ENCODE measurements at regions of chr19 and their contacts with region 1.

Region 1: DNA sequence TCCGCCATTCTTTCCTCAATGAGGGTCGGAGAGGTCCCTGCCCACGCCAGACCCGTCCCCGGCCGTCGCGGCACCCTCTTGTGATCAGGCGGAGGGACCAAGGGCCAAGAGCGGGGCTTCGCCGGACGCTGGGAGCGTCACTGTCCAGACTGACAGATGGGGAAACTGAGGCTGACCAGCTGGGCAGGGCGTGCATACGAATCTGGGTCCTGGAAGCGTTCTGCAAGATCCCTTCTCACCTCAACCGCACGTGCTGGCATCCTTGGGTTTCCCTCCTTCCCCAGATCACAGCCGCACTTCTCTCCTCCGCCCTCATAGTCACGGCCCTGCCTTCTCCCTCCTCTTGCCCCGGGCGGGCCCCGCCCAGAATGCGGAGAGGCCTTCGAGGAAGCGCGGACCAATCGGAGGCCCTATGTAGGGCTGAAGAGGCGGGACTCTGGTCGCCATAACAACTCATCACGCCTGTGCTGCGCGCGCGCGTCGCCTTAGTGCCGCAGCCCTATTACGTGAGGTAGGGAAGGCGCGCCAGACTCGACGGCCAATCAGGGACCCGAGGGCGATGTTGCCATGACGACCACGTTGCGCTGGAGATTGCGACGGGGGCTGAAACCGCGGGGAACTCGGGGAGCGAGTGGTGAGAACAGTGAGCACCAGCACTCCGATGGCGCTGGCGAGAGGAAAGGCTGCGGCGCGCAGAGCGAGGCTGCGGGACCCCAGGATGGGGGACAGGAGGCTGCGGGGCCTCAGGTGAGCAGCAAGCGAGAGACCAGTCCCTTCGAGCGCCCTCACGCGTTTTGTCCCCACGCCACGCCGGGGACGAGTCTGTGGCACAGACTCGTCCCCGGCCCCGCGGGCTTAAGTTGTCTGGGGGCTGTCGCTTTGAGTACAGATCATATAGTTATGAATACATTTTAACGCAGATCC is 5.7 kb downstream of the RNF225 start:
- DNase-seq: peak; percentile 95 to 100 (median 99)
- ATAC-seq: peak; percentile 96 to 99 (median 98)
- H3K4me3 ChIP-seq: peak overlapping the region; percentile 74 to 75
- H3K4me3 Mint-ChIP-seq: peak overlapping the region; percentile 84 to 88 (median 86)
- H3K27ac ChIP-seq: peak overlapping the region; percentile 92
- H3K27ac Mint-ChIP-seq: peak overlapping the region; percentile 84 to 88
- H3K4me1 ChIP-seq: peaks cover 4 to 23% of the 10 kb centered on the region in 2 experiments
- H3K4me1 Mint-ChIP-seq: peaks cover 10 to 14% (median 14%) of the 10 kb centered on the region in 3 donors
- H3K27me3 ChIP-seq: peaks cover 0 to 28% of the 10 kb centered on the region in 2 experiments
- H3K27me3 Mint-ChIP-seq: peaks cover 5 to 16% of the 10 kb centered on the region in 2 donors

Region 2: GRCh38 chr19:58305065-58305931 is 95.9 kb before region 1 on chr19 and contains the start of gene ERVK3-1:
- CTCF ChIA-PET with region 1: no interaction called
- POLR2A ChIA-PET with region 1: interaction called in 1 of 2 experiments, 14 read pairs
- DNase-seq: peak; percentile 79 to 98 (median 94)
- ATAC-seq: peak; percentile 97 to 99 (median 98)
- H3K4me3 ChIP-seq: peak within 1 kb of the TSS; percentile 92 to 93
- H3K4me3 Mint-ChIP-seq: peak within 1 kb of the TSS; percentile 96 to 99 (median 98)
- H3K27ac ChIP-seq: peak within 1 kb of the TSS; percentile 93
- H3K27ac Mint-ChIP-seq: peak within 1 kb of the TSS; percentile 95 to 97
- H3K4me1 ChIP-seq: peaks cover 12 to 17% of the 10 kb centered on the region in 2 experiments
- H3K4me1 Mint-ChIP-seq: peaks cover 52 to 55% (median 52%) of the 10 kb centered on the region in 3 donors
- H3K27me3 ChIP-seq: no peaks in the 10 kb centered on the region
- H3K27me3 Mint-ChIP-seq: no peaks in the 10 kb centered on the region
- total RNA-seq, gene ERVK3-1: 68.0 to 137 (median 81.9) TPM

Measured in T-cell (primary cell).